PC-9 (cell line): ENCODE measurements at regions of chr1 and their contacts with region 1.

Region 1: DNA sequence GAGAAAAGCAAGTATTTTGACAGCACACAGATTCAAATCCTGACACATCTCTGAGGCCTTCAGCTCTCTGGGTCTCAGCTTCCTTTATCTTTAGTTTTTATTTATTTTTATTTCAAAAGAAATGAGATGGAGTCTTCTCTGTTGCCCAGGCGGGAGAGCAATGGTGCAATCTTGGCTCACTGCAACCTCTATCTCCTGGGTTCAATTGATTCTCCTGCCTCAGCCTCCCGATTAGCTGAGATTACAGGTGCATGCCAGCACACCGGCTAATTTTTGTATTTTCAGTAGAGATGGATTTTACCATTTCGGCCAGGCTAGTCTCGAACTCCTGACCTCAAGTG is 19.1 kb upstream of the ATP2B4 start:
- DNase-seq: no peak
- H3K4me3 ChIP-seq: no peak overlapping the region
- H3K27ac ChIP-seq: no peak overlapping the region
- H3K4me1 ChIP-seq: peaks cover 28% of the 10 kb centered on the region
- H3K27me3 ChIP-seq: no peaks in the 10 kb centered on the region
- CTCF ChIP-seq: no peak

Region 2: GRCh38 chr1:203504397-203505250 is 102.9 kb before region 1 on chr1:
- CTCF ChIA-PET with region 1: interaction called, 6 read pairs
- POLR2A ChIA-PET with region 1: no interaction called
- intact Hi-C with region 1: loop called (anchors 1 kb)
- DNase-seq: peak; percentile 65 to 78
- H3K4me3 ChIP-seq: no peak overlapping the region
- H3K27ac ChIP-seq: no peak overlapping the region
- H3K4me1 ChIP-seq: peaks cover 15% of the 10 kb centered on the region
- H3K27me3 ChIP-seq: no peaks in the 10 kb centered on the region
- CTCF ChIP-seq: peak; percentile 95